ENCODE measurements at regions of chr17 and their contacts with region 1.

Region 1: DNA sequence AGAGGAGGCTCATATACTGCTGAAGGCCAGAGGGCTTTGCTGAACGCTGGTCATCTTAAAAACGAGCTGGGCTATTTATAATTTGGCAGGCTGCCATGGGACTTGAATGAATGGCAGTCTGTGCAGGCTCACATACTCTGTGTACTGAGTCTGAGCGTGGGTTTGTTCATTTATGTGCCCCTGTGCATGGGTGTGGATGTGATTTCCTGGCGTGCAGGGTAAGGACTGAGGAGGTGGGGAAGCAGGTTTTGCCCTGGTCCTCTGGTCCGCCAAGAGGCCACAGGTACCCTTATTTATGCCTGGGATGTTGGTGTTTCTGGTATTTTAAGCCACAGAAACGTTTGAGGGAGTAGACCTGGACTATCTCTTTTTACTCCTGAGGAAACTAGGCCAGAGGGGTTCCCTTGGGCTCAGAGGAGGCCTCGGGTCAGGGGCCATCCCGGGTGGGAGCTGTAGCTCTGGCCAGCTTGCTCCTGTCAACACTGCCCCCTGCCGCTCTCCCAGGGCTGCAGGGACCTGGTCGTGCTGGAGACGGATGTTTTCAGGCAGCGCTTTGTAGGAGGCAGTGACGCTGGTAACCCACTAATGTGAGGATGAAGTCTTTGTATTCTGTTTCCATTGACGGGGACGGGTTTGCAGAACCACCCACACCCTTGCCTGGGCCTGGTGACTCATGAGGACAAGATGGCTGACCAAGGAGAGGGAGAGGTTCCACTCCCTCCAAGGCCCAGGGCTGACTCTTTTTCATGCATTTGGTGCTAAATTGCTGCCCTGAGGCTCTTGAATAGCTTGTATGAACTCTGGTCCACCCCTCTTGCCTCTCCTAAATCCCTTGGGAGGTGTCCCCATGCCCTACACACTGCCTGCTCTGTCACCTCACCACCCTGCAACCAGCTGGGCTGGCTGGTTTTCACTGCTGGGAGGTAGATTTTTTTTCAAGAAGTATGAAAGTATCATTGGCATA is 184.5 kb downstream of the MSI2 start:
- DNase-seq: peak; percentile 93
- ATAC-seq: peak; percentile 86
- H3K4me3 Mint-ChIP-seq: peak overlapping the region; percentile 38
- H3K27ac Mint-ChIP-seq: peak overlapping the region; percentile 95
- H3K4me1 Mint-ChIP-seq: peaks cover 85% of the 10 kb centered on the region
- H3K27me3 Mint-ChIP-seq: no peaks in the 10 kb centered on the region

Region 2: GRCh38 chr17:57255776-57256681 is 184.8 kb before region 1 on chr17 and contains the start of gene MSI2:
- CTCF ChIA-PET with region 1: interaction called, 3 read pairs
- POLR2A ChIA-PET with region 1: no interaction called
- intact Hi-C with region 1: loop called (anchors 1 to 5 kb)
- DNase-seq: peak; percentile 93
- ATAC-seq: peak; percentile 75
- H3K4me3 Mint-ChIP-seq: peak within 1 kb of the TSS; percentile 80
- H3K27ac Mint-ChIP-seq: peak within 1 kb of the TSS; percentile 79
- H3K4me1 Mint-ChIP-seq: peaks cover 42% of the 10 kb centered on the region
- H3K27me3 Mint-ChIP-seq: no peaks in the 10 kb centered on the region
- total RNA-seq, gene MSI2: 55.3 to 57.2 TPM

Region 3: GRCh38 chr17:57408071-57408811 is 32.6 kb before region 1 on chr17:
- CTCF ChIA-PET with region 1: interaction called, 5 read pairs
- POLR2A ChIA-PET with region 1: no interaction called
- intact Hi-C with region 1: loop called in 1 of 2 experiments (anchors 5 kb)
- DNase-seq: peak; percentile 72
- ATAC-seq: peak; percentile 82
- H3K4me3 Mint-ChIP-seq: peak overlapping the region; percentile 7
- H3K27ac Mint-ChIP-seq: peak overlapping the region; percentile 44
- H3K4me1 Mint-ChIP-seq: peaks cover 40% of the 10 kb centered on the region
- H3K27me3 Mint-ChIP-seq: no peaks in the 10 kb centered on the region

Region 4: GRCh38 chr17:57463103-57463851 is 22.5 kb after region 1 on chr17:
- CTCF ChIA-PET with region 1: interaction called, 5 read pairs
- POLR2A ChIA-PET with region 1: no interaction called
- intact Hi-C with region 1: loop called (anchors 1 kb)
- DNase-seq: peak; percentile 94
- ATAC-seq: peak; percentile 93
- H3K4me3 Mint-ChIP-seq: peak overlapping the region; percentile 26
- H3K27ac Mint-ChIP-seq: peak overlapping the region; percentile 94
- H3K4me1 Mint-ChIP-seq: peaks cover 71% of the 10 kb centered on the region
- H3K27me3 Mint-ChIP-seq: no peaks in the 10 kb centered on the region

Region 5: DNA sequence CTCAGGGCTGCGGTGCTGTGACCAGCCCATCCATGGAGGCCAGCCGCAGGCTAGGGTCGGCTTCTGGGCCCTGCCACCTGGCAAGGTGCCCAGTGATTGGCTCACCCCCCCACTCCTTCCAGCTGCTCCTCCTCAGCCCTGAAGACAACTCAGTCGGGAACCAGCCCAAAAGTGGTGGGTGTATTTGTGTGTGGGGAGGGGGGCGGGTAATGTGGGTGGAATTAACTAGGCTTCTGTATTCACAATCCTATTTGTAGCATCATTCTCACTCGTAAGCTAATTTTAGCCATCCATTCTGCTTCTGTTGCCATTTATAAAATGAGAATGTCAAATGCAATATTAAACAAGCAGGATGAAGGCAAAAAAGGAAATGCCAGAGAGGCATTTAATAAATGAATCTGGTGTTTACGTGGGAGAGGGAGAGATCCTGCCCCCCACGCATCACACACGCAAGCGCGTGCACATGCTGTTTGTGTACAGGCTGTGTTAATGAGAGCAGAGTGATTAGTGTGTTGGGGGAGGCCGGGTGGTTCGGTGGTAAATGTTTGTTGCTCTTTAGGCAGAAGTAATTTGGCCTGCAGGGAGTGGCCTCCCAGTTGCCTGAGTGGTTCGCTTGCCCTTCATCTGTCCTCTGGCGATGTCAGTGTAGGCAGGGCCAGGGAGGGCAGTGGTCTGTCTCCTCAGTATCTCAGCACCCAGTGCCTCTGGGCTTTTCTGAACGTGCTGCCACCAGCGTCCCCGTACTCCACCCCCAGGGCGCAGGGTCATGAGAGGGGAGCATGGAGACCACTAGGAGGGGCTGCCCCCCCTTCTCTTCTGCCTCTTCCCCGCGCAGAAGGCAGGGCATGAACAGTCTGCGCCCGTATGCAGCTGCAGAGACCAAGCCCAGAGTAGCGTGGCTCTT is 164.2 kb after region 1 on chr17:
- CTCF ChIA-PET with region 1: no interaction called
- POLR2A ChIA-PET with region 1: no interaction called
- intact Hi-C with region 1: loop called (anchors 1 to 5 kb)
- DNase-seq: peak; percentile 56
- ATAC-seq: peak; percentile 21
- H3K4me3 Mint-ChIP-seq: peak overlapping the region; percentile 22
- H3K27ac Mint-ChIP-seq: peak overlapping the region; percentile 97
- H3K4me1 Mint-ChIP-seq: peaks cover 75% of the 10 kb centered on the region
- H3K27me3 Mint-ChIP-seq: no peaks in the 10 kb centered on the region